PC-9 (cell line): ENCODE measurements at regions of chr4 and their contacts with region 1.

Region 1: GRCh38 chr4:88104902-88105610 is 53.4 kb downstream of the ABCG2 start:
- DNase-seq: peak in 1 of 2 experiments; percentile 57
- H3K4me3 ChIP-seq: no peak overlapping the region
- H3K27ac ChIP-seq: no peak overlapping the region
- H3K4me1 ChIP-seq: peaks cover 25% of the 10 kb centered on the region
- H3K27me3 ChIP-seq: no peaks in the 10 kb centered on the region
- CTCF ChIP-seq: no peak

Region 2: GRCh38 chr4:88143504-88143903 is 38.4 kb after region 1 on chr4:
- CTCF ChIA-PET with region 1: interaction called, 4 read pairs
- POLR2A ChIA-PET with region 1: no interaction called
- intact Hi-C with region 1: loop called (anchors 2 kb)
- DNase-seq: peak in 1 of 2 experiments; percentile 88
- H3K4me3 ChIP-seq: peak overlapping the region; percentile 18; the same call in 1 of the 2 replicates
- H3K27ac ChIP-seq: peak overlapping the region; percentile 82
- H3K4me1 ChIP-seq: peaks cover 79% of the 10 kb centered on the region
- H3K27me3 ChIP-seq: no peaks in the 10 kb centered on the region
- CTCF ChIP-seq: no peak

Region 3: GRCh38 chr4:88158489-88159243 is 53.6 kb after region 1 on chr4 and contains the start of gene ABCG2:
- CTCF ChIA-PET with region 1: no interaction called
- POLR2A ChIA-PET with region 1: no interaction called
- intact Hi-C with region 1: loop called (anchors 5 kb)
- DNase-seq: peak; percentile 46 to 60
- H3K4me3 ChIP-seq: peak within 1 kb of the TSS; percentile 69
- H3K27ac ChIP-seq: peak within 1 kb of the TSS; percentile 63
- H3K4me1 ChIP-seq: peaks cover 30% of the 10 kb centered on the region
- H3K27me3 ChIP-seq: no peaks in the 10 kb centered on the region
- CTCF ChIP-seq: no peak
- total RNA-seq, gene ABCG2: 13.3 and 24.6 TPM in 2 replicates

Region 4: DNA sequence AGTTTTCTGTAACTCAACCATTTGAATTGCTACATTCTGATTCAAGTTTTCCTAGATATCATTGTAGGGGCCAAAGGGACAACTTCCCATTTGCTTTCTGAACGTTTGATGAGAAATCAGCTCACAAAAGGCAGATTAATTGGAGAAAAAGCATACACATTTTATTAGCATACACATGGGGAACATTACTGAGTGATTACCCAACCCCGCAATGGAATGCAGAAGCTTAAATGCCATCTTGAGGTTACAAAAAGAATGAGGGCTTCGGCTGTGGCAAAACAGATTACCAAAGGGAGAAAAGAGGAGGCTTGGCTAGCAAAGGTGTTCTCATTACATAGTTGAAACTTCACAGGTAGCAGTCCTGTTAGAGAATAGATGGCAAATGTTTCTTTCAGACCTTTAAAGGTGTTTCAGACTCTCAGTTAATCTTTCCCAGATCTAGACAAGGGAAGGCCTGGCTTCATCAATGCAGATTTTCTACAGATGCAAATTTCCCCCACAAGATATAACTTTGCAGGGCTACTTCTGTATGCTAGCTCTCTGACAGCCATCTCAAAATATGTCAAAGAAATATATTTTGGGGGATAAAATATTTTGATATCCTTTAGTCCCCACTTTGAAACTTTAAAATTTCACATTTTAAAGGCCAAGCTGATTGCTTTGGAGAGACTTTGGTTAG is 247.1 kb after region 1 on chr4:
- CTCF ChIA-PET with region 1: no interaction called
- POLR2A ChIA-PET with region 1: no interaction called
- intact Hi-C with region 1: no loop called
- DNase-seq: peak in 1 of 2 experiments; percentile 55
- H3K4me3 ChIP-seq: no peak overlapping the region
- H3K27ac ChIP-seq: no peak overlapping the region
- H3K4me1 ChIP-seq: no peaks in the 10 kb centered on the region; the same call in 1 of the 2 replicates
- H3K27me3 ChIP-seq: no peaks in the 10 kb centered on the region
- CTCF ChIP-seq: no peak